Tibial artery (tissue), 4 donors: ENCODE measurements at regions of chr9 and their contacts with region 1.

Region 1: DNA sequence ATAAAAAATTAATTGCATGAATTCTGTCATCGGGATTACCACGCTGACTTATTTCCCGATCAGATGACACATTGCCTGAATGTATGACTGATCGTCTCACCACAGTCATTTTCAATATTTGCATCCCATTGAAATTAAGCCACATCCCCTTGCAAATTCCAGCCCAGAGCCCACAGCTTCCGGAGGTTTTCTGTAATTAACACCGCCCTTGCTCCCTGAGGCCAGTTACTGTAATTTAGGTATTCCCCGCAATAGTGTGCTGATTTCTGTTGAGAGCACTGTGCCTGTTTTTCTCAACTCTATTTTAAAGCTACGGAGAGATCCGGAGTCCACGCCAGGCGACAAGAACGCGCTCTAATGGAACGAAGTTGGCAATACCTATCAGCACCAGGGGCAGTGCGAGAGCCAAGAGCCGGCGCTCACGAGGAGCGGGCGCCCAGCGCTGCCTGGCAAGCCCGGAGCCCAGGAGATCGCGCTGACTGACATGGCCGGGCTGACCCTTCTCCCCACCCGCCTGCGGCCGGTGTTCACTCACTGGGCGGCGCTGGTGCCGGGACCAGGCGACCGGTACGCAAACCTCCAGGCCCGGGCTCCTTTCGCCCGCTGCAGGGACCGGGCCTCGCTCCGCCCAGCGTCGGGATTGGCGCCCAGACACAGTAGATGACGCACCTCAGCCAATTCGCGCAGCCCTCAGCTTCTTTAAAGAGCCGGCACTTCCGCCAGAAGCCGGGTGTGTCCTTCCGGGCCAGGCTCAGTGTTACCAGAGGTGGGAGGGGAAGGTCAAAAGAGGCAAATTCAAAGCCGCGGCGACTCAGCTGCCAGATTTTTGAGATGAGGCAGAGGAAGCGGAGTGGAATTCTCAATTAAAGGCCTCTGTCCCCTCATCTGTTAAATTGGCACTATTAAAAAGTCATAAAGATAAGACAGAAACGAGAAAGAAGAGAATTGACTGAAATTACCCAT is at the start of gene PLGRKT:
- DNase-seq: peak; percentile 97
- H3K4me3 ChIP-seq: peak within 1 kb of the TSS; percentile 57 to 60
- H3K27ac ChIP-seq: peak within 1 kb of the TSS; percentile 77 to 88
- H3K4me1 ChIP-seq: peaks cover 0 to 14% (median 8%) of the 10 kb centered on the region in 4 donors
- H3K27me3 ChIP-seq: no peaks in the 10 kb centered on the region
- CTCF ChIP-seq: peak in 1 of 2 experiments; percentile 22

Region 2: DNA sequence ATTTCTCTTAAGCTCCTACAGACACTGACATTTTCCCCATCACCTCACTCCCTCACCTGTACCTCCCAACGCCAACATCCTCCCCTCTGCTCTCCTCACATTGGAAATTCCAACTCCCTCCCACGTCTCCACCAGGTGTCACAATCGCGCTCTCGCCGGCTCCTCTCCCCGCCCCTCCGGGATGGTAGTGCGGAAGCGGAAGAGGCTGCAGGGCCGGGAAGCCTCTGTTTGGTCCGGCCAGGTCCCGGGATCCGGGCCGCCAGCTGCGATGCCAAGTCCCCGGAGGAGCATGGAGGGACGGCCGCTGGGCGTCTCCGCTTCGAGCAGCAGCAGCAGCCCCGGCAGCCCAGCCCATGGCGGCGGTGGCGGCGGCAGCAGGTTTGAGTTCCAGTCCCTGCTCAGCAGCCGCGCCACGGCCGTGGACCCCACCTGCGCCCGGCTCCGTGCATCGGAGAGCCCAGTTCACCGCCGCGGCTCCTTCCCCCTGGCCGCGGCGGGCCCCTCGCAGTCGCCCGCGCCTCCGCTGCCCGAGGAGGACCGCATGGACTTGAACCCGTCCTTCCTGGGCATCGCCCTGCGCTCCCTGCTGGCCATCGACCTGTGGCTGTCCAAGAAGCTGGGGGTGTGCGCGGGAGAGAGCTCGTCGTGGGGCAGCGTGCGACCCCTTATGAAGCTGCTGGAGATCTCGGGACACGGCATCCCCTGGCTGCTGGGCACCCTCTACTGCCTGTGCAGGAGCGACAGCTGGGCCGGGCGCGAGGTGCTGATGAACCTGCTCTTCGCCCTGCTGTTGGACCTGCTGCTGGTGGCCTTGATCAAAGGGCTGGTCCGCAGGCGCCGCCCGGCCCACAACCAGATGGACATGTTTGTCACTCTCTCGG is 775.2 kb before region 1 on chr9 and contains the start of gene PLPP6:
- intact Hi-C with region 1: loop called (anchors 10 kb)
- DNase-seq: peak; percentile 92 to 94
- H3K4me3 ChIP-seq: peak within 1 kb of the TSS; percentile 83 to 89
- H3K27ac ChIP-seq: peak within 1 kb of the TSS; percentile 81 to 89
- H3K4me1 ChIP-seq: peaks cover 0 to 47% (median 28%) of the 10 kb centered on the region in 4 donors
- H3K27me3 ChIP-seq: no peaks in the 10 kb centered on the region
- CTCF ChIP-seq: peak; percentile 58

Region 3: GRCh38 chr9:4750023-4750673 is 687.4 kb before region 1 on chr9:
- intact Hi-C with region 1: loop called (anchors 5 kb)
- DNase-seq: no peak
- H3K4me3 ChIP-seq: no peak overlapping the region
- H3K27ac ChIP-seq: no peak overlapping the region
- H3K4me1 ChIP-seq: no peaks in the 10 kb centered on the region
- H3K27me3 ChIP-seq: no peaks in the 10 kb centered on the region
- CTCF ChIP-seq: peak; percentile 59 to 65

Region 4: DNA sequence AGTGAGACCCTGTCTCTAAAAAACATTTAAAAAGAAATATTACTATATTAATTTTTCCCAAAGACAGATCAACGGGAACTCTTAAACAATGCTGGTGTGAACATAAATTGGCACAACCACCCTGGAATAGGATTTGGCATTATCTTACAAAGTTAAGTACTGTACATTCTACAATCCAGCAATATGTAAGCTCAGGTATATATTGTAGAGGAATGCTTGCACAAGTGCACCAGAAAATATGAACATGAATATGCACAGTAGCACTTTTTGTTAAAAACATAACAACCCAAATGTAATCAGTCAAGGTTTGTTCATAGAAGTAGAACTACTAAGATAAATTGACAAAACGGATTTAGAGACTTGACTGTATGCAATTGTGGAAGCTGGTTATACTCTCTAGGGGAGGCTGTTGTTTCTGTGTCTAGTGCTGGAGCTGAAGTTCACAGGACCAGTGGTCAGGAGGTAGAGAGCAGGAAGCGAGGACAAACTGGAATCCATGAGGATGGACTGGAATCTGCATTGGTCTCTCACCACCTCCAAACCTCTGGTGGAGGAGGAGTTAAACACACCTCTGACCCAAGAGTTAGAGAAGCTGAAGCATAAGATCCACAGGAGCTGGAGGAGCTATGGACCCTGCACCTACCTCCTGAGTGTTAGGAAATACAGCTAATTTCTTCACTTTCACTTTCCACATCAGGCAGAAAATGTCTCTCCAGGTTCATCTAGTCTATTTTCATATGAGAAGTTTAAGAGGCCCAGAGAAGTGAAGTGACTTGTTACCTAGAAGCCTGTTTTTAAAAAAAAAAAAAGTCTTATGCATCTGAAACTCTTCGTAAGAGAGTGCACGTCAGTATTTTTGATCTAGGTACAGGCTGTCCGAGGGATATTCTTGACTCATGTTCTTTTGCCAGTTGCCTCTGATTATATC is 171.0 kb after region 1 on chr9:
- intact Hi-C with region 1: loop called (anchors 5 kb)
- DNase-seq: no peak
- H3K4me3 ChIP-seq: peak overlapping the region; percentile 45 to 53
- H3K27ac ChIP-seq: peak overlapping the region; percentile 78 to 89
- H3K4me1 ChIP-seq: peaks cover 0 to 38% (median 3%) of the 10 kb centered on the region in 4 donors
- H3K27me3 ChIP-seq: no peaks in the 10 kb centered on the region
- CTCF ChIP-seq: peak in 1 of 2 experiments; percentile 9